Natural killer cell (primary cell): ENCODE measurements at regions of chr1 and their contacts with region 1.

Region 1: GRCh38 chr1:101238681-101239094 is 1.9 kb downstream of the S1PR1 start:
- DNase-seq: peak; percentile 83 to 89
- ATAC-seq: peak; percentile 57 to 78 (median 64)
- H3K4me3 ChIP-seq: peak overlapping the region; percentile 74
- H3K4me3 Mint-ChIP-seq: peak overlapping the region; percentile 98
- H3K27ac ChIP-seq: peak overlapping the region; percentile 60
- H3K27ac Mint-ChIP-seq: peak overlapping the region; percentile 91 to 96
- H3K4me1 ChIP-seq: peaks cover 43% of the 10 kb centered on the region
- H3K4me1 Mint-ChIP-seq: peaks cover 74 to 82% of the 10 kb centered on the region in 2 donors
- H3K27me3 ChIP-seq: no peaks in the 10 kb centered on the region
- H3K27me3 Mint-ChIP-seq: no peaks in the 10 kb centered on the region
- CTCF ChIP-seq: peak; percentile 91

Region 2: DNA sequence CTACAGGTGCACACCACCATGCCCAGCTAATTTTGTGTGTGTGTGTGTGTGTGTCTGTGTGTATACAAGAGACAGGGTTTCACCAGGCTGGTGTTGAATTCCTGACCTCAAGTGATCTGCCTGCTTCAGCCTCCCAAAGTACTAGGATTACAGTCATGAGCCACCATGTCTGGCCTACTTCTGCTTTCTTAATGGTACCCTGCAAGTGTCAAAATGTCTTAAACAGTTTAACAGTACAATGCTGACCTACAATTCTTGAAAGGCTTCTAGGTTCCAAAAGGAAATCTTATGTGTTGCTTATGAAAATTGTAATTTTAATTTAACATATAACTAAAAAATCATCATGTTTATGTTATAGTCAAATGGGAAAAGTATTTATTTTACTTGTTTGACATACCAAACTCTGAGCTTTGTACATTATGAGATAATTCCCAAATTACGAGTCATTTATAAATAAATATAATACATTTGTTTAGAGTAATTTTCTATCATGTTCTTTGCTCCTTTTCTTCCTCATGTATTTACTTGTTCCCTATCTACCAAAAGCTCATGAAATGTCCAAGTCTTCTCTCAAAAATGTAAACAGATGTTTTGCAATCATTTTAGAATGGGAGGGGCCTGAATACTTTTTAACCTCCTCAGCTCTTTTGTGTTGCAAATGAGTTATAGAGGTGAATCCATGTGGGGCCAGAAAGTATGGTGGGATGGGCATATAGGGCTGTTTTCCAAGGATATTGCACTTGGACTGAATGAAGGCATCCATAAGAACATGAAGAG is 527.6 kb before region 1 on chr1:
- intact Hi-C with region 1: loop called (anchors 5 kb)
- DNase-seq: no peak
- ATAC-seq: no peak
- H3K4me3 ChIP-seq: no peak overlapping the region
- H3K4me3 Mint-ChIP-seq: no peak overlapping the region
- H3K27ac ChIP-seq: no peak overlapping the region
- H3K27ac Mint-ChIP-seq: peak overlapping the region in 1 of 2 donors; percentile 96
- H3K4me1 ChIP-seq: peaks cover 22% of the 10 kb centered on the region
- H3K4me1 Mint-ChIP-seq: peaks cover 46 to 49% of the 10 kb centered on the region in 2 donors
- H3K27me3 ChIP-seq: peaks cover 2% of the 10 kb centered on the region
- H3K27me3 Mint-ChIP-seq: peaks cover 3 to 35% of the 10 kb centered on the region in 2 donors
- CTCF ChIP-seq: no peak

Region 3: GRCh38 chr1:101025657-101026504 is 212.8 kb before region 1 on chr1 and contains the start of gene DPH5:
- intact Hi-C with region 1: loop called (anchors 2 kb)
- DNase-seq: peak; percentile 80 to 90
- ATAC-seq: peak; percentile 98 to 100 (median 99)
- H3K4me3 ChIP-seq: peak within 1 kb of the TSS; percentile 66
- H3K4me3 Mint-ChIP-seq: peak within 1 kb of the TSS; percentile 75
- H3K27ac ChIP-seq: peak within 1 kb of the TSS; percentile 61
- H3K27ac Mint-ChIP-seq: peak within 1 kb of the TSS; percentile 90 to 94
- H3K4me1 ChIP-seq: peaks cover 9% of the 10 kb centered on the region
- H3K4me1 Mint-ChIP-seq: peaks cover 32 to 42% of the 10 kb centered on the region in 2 donors
- H3K27me3 ChIP-seq: no peaks in the 10 kb centered on the region
- H3K27me3 Mint-ChIP-seq: no peaks in the 10 kb centered on the region
- CTCF ChIP-seq: no peak
- total RNA-seq, gene DPH5: 17.1 to 22.9 (median 19.9) TPM

Region 4: GRCh38 chr1:101105877-101106276 is 132.8 kb before region 1 on chr1:
- intact Hi-C with region 1: no loop called
- DNase-seq: no peak
- ATAC-seq: no peak
- H3K4me3 ChIP-seq: no peak overlapping the region
- H3K4me3 Mint-ChIP-seq: no peak overlapping the region
- H3K27ac ChIP-seq: no peak overlapping the region
- H3K27ac Mint-ChIP-seq: no peak overlapping the region
- H3K4me1 ChIP-seq: peaks cover 3% of the 10 kb centered on the region
- H3K4me1 Mint-ChIP-seq: peaks cover 12 to 20% of the 10 kb centered on the region in 2 donors
- H3K27me3 ChIP-seq: no peaks in the 10 kb centered on the region
- H3K27me3 Mint-ChIP-seq: peaks cover 0 to 5% of the 10 kb centered on the region in 2 donors
- CTCF ChIP-seq: no peak

Region 5: GRCh38 chr1:101136739-101137138 is 101.9 kb before region 1 on chr1:
- intact Hi-C with region 1: loop called (anchors 2 kb)
- DNase-seq: peak in 1 of 2 donors; percentile 74
- ATAC-seq: peak; percentile 63 to 70 (median 66)
- H3K4me3 ChIP-seq: no peak overlapping the region
- H3K4me3 Mint-ChIP-seq: peak overlapping the region; percentile 80
- H3K27ac ChIP-seq: peak overlapping the region; percentile 69
- H3K27ac Mint-ChIP-seq: peak overlapping the region; percentile 88 to 93
- H3K4me1 ChIP-seq: peaks cover 6% of the 10 kb centered on the region
- H3K4me1 Mint-ChIP-seq: peaks cover 38 to 50% of the 10 kb centered on the region in 2 donors
- H3K27me3 ChIP-seq: no peaks in the 10 kb centered on the region
- H3K27me3 Mint-ChIP-seq: no peaks in the 10 kb centered on the region
- CTCF ChIP-seq: no peak

Region 6: DNA sequence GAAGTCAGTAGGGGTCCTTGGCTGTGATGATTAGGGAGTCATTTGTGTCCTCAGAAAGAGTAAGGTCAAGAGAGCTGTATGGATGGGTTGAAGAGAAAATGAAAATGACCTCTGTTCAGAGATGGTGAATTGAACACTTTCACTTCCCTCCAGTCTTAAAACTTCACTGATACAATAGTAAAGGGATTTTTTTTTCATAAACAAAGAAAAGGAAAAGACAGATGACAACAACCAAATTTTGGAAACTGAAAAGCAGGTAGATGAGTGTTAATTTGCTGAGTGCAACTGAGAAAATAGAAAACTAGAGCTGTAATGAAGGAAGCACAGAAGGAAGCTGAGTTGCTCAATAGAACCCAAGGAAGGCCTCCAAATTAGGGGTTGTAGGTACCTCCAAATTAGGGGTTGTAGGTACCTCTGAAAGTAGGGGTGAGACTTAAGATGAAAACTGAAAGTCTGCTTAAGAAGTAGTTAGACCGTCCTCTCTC is 16.7 kb before region 1 on chr1:
- intact Hi-C with region 1: no loop called
- DNase-seq: no peak
- ATAC-seq: no peak
- H3K4me3 ChIP-seq: no peak overlapping the region
- H3K4me3 Mint-ChIP-seq: no peak overlapping the region
- H3K27ac ChIP-seq: no peak overlapping the region
- H3K27ac Mint-ChIP-seq: no peak overlapping the region
- H3K4me1 ChIP-seq: no peaks in the 10 kb centered on the region
- H3K4me1 Mint-ChIP-seq: peaks cover 0 to 6% of the 10 kb centered on the region in 2 donors
- H3K27me3 ChIP-seq: no peaks in the 10 kb centered on the region
- H3K27me3 Mint-ChIP-seq: peaks cover 0 to 2% of the 10 kb centered on the region in 2 donors
- CTCF ChIP-seq: no peak

Region 7: GRCh38 chr1:101309334-101310311 is 70.9 kb after region 1 on chr1:
- intact Hi-C with region 1: loop called (anchors 5 kb)
- DNase-seq: peak; percentile 72 to 94
- ATAC-seq: peak; percentile 66 to 89 (median 85)
- H3K4me3 ChIP-seq: peak overlapping the region; percentile 28
- H3K4me3 Mint-ChIP-seq: peak overlapping the region; percentile 84
- H3K27ac ChIP-seq: peak overlapping the region; percentile 86
- H3K27ac Mint-ChIP-seq: peak overlapping the region; percentile 91
- H3K4me1 ChIP-seq: peaks cover 76% of the 10 kb centered on the region
- H3K4me1 Mint-ChIP-seq: peaks cover 86 to 88% of the 10 kb centered on the region in 2 donors
- H3K27me3 ChIP-seq: no peaks in the 10 kb centered on the region
- H3K27me3 Mint-ChIP-seq: no peaks in the 10 kb centered on the region
- CTCF ChIP-seq: peak; percentile 83

Region 8: GRCh38 chr1:101357444-101357986 is 118.8 kb after region 1 on chr1:
- intact Hi-C with region 1: loop called (anchors 5 kb)
- DNase-seq: peak; percentile 54 to 94
- ATAC-seq: peak; percentile 96 to 100 (median 99)
- H3K4me3 ChIP-seq: no peak overlapping the region
- H3K4me3 Mint-ChIP-seq: peak overlapping the region; percentile 25
- H3K27ac ChIP-seq: no peak overlapping the region
- H3K27ac Mint-ChIP-seq: peak overlapping the region; percentile 83 to 86
- H3K4me1 ChIP-seq: no peaks in the 10 kb centered on the region
- H3K4me1 Mint-ChIP-seq: peaks cover 22 to 29% of the 10 kb centered on the region in 2 donors
- H3K27me3 ChIP-seq: no peaks in the 10 kb centered on the region
- H3K27me3 Mint-ChIP-seq: no peaks in the 10 kb centered on the region
- CTCF ChIP-seq: peak; percentile 82